Common myeloid progenitor, CD34-positive (primary cell): ENCODE measurements at regions of chr4 and their contacts with region 1.

Region 1: GRCh38 chr4:86497980-86498862 is 95.9 kb upstream of the PTPN13 start:
- DNase-seq: peak; percentile 57 to 76 (median 72)
- H3K4me3 ChIP-seq: peak overlapping the region in 1 of 7 experiments; percentile 19
- H3K27ac ChIP-seq: no peak overlapping the region
- H3K4me1 ChIP-seq: peaks cover 0 to 21% (median 12%) of the 10 kb centered on the region in 4 experiments
- H3K27me3 ChIP-seq: no peaks in the 10 kb centered on the region

Region 2: DNA sequence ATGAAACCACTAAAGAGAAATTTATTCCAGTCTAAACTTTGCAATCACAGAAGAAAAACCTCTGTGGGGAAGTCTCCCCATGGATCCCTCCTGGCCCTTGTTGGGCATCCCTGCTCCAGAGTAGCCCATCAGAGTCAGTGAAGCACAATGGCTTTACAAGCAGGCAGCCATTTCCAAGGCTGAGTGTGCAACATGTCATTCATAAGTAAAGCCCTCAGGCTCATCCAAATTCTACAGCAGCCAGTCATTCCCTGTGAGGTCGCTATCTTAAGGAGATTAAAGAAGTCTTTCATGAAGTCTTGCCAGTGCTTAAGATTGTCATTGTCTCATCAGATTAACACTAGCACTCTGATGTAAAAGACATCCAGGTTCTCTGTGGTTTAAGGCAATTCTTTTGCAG is 121.4 kb before region 1 on chr4:
- CTCF ChIA-PET with region 1: no interaction called
- POLR2A ChIA-PET with region 1: no interaction called
- DNase-seq: no peak
- H3K4me3 ChIP-seq: no peak overlapping the region
- H3K27ac ChIP-seq: no peak overlapping the region
- H3K4me1 ChIP-seq: no peaks in the 10 kb centered on the region
- H3K27me3 ChIP-seq: no peaks in the 10 kb centered on the region

Region 3: DNA sequence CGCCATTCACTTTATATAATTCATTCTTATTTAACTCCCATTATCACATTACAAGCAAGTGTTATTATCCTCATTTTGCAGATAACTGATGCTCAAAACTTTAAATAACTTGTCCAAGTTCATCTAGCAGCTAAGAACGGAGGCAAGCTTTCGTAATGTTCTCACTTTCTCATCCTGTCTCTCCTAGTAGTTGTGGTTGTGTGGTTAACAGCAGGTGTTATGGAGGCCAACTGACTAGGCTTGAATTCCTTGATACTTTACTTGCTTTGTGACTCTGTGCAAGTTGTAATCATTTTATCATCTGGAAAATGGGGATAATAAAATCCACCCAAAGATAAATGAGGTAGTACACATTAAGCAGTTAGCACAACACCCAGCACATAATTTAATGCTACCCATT is 14.0 kb before region 1 on chr4:
- CTCF ChIA-PET with region 1: interaction called, 11 read pairs
- POLR2A ChIA-PET with region 1: no interaction called
- DNase-seq: peak in 2 of 3 donors; percentile 43 to 50
- H3K4me3 ChIP-seq: no peak overlapping the region
- H3K27ac ChIP-seq: no peak overlapping the region
- H3K4me1 ChIP-seq: peaks cover 0 to 20% (median 9%) of the 10 kb centered on the region in 4 experiments
- H3K27me3 ChIP-seq: no peaks in the 10 kb centered on the region

Region 4: DNA sequence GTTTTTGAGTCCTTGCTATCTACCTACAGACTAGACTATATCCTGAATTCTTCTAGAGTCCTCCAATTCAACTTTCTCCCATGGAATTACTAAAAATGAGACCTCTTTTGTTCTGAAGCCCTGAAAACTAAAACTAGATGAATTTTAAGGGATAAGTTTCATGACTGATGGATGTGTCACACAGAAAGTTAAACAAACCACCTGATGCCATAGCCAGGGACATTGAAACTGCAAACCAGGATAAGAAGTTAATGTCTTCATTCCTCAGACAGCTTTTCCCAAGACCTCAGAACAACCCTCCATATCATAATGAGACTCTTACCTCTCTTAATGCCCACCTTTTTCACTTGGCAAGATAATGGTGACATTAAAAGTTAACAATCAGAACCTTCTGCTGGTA is 14.4 kb after region 1 on chr4:
- CTCF ChIA-PET with region 1: interaction called, 11 read pairs
- POLR2A ChIA-PET with region 1: no interaction called
- DNase-seq: no peak
- H3K4me3 ChIP-seq: no peak overlapping the region
- H3K27ac ChIP-seq: no peak overlapping the region
- H3K4me1 ChIP-seq: no peaks in the 10 kb centered on the region
- H3K27me3 ChIP-seq: no peaks in the 10 kb centered on the region

Region 5: DNA sequence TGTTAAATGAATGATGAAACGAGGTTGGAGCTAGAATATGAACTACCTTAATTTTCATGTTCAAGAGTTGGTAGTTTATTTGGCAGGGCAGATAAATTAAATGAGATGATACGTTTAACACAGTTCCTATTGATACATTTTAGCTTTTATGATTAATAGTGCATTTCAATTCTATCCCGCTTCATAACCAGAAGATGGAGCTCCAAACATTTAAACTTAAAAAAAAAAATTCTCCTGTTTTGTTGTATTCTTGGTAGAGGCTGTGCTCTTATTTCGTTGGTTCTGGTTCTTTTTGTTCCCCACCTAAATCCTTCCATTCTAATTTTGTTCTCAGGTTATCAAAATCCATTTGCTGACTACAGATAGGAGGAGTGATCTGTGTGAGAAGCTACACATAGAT is 24.1 kb after region 1 on chr4:
- CTCF ChIA-PET with region 1: interaction called, 17 read pairs
- POLR2A ChIA-PET with region 1: no interaction called
- DNase-seq: peak in 2 of 3 donors; percentile 8
- H3K4me3 ChIP-seq: no peak overlapping the region
- H3K27ac ChIP-seq: no peak overlapping the region
- H3K4me1 ChIP-seq: peaks cover 0 to 6% (median 0%) of the 10 kb centered on the region in 4 experiments
- H3K27me3 ChIP-seq: no peaks in the 10 kb centered on the region

Region 6: DNA sequence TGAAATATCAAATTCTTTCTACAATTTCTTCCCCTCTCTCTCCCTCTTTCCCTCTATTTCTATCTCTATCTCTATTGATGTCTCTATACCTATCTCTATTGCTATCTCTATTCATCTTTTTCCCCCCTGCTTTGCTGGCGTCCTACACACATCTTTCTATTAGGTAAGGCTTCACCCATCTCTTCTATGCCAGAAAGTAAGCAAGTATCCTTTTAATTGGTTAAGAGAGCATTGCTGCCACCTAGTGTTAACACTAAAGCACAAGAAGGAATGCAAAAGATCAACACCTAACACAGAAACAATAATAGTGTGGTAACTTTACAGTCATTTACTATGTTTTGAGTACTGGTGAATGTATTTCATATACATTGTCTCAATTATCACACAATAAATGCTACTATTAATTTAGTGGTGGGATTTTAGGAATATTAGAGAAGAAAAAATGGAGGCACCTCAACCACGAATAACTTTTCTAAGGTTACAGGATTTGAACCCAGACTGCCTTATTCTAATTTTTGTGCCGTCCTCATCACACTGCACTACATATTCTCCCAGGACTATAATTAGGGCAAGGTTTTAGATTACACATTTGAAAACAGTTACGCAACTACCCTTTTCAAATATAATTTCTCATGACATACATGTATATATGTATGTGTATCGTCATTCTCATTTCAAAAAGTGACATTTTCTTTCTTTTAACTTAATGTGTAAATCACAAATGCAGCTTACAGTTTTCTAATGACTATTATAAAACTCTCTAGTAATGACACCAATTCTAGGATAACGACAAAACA is 397.7 kb after region 1 on chr4:
- CTCF ChIA-PET with region 1: interaction called, 122 read pairs
- POLR2A ChIA-PET with region 1: interaction called, 3 read pairs
- DNase-seq: peak; percentile 68 to 85 (median 82)
- H3K4me3 ChIP-seq: no peak overlapping the region
- H3K27ac ChIP-seq: no peak overlapping the region
- H3K4me1 ChIP-seq: peaks cover 0 to 12% (median 11%) of the 10 kb centered on the region in 4 experiments
- H3K27me3 ChIP-seq: peaks cover 0 to under 1% (median 0%) of the 10 kb centered on the region in 5 experiments

Region 7: GRCh38 chr4:86901866-86902265 is 403.6 kb after region 1 on chr4:
- CTCF ChIA-PET with region 1: interaction called, 39 read pairs
- POLR2A ChIA-PET with region 1: no interaction called
- DNase-seq: no peak
- H3K4me3 ChIP-seq: no peak overlapping the region
- H3K27ac ChIP-seq: no peak overlapping the region
- H3K4me1 ChIP-seq: peaks cover 0 to 5% (median 0%) of the 10 kb centered on the region in 4 experiments
- H3K27me3 ChIP-seq: no peaks in the 10 kb centered on the region